ENCODE measurements at regions of chr19 and their contacts with region 1.

Region 1: DNA sequence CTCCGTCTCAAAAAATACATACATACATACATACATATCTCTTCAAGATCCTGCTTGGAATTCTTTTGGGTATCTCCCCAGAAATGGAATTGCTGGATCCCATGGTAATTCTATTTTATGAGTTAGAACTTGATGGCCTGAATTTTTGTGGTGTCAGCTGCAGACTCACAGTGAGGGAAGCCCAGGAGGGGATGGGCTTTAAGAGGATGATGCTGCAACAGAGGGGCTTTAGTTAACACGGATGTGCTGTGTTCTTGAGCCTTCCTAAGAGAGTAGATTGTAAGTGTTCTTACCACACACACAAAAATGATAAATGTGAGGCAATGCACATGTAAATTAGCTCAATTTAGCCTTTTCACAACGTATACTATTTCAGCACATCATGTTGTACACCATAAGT is 31.8 kb downstream of the CACNG6 start:
- DNase-seq: no peak
- CTCF ChIP-seq: no peak

Region 2: DNA sequence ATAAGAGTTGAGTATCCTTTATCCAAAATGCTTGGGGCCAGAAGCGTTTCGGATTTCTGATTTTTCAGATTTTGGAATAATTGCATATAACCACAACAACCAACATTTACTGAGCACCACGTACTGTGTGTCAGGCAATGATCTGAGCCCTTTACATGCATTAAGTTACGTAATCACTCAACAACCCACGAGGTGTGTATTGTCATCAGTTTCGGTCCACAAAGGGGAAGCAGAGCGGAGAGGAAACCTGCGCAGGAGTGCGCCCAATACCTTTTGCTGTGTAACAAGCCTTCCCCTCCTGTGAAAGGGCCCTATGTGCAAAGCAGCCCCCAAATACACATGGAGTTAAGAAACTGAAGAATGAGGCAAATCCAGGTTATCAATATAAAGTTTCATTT is 178.3 kb before region 1 on chr19:
- in situ Hi-C with region 1: loop called (anchors 5 kb)
- DNase-seq: no peak
- CTCF ChIP-seq: no peak

Region 3: DNA sequence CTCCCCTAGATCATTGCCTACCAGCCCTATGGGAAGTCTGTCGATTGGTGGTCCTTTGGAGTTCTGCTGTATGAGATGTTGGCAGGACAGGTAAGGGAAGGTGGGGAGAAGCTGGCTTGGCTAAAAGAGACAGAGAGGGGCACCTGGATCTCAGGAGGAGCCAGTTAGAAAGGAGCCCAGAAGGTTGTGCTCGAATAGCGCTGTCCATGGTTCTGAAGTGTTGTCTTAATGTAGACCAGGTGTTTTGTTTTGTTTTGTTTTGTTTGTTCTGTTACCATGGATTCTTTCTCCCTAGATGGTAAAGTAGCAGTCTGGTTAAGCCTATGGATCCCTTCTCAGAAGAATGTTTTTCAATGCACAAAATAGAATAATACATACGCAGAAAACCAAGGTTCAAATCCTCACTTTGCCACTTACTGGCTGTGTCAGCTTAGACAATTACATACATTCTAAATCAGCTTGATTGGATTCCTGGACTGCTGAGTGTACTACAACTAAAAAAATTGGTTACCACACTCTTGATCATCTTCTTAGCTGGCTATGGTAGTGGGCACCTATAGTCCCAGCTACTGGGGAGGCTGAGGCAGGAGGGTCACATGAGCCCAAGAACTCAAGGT is 120.0 kb before region 1 on chr19:
- in situ Hi-C with region 1: no loop called
- DNase-seq: peak; percentile 64
- CTCF ChIP-seq: no peak

Measured in GM13977 (cell line).